CD14-positive monocyte (primary cell): ENCODE measurements at regions of chr4 and their contacts with region 1.

Region 1: DNA sequence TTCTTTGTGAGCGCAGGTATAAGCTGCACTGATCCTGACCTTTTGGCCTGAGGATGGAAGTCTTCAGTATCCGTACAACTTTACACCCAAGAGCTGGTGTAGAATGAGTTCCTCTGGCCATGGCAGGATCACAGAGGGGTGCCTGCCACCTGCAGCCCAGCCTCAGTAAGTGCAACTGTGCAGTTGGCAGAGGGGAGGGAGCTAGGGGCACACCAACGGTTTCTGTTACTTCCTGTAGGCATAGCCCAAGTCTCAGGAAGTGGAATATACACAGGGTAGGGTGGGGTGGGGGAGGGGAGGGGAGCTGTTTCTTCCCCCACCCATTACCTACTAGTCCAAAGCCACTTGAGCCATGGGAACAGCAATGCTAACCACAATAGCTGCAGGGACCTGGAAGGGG is 85.4 kb upstream of the GBA3 start:
- DNase-seq: peak in 2 of 3 donors; percentile 2 to 43
- H3K4me3 ChIP-seq: no peak overlapping the region
- H3K4me3 Mint-ChIP-seq: no peak overlapping the region
- H3K27ac ChIP-seq: no peak overlapping the region
- H3K27ac Mint-ChIP-seq: no peak overlapping the region
- H3K4me1 ChIP-seq: no peaks in the 10 kb centered on the region
- H3K4me1 Mint-ChIP-seq: peaks cover 3% of the 10 kb centered on the region
- H3K27me3 ChIP-seq: no peaks in the 10 kb centered on the region
- H3K27me3 Mint-ChIP-seq: no peaks in the 10 kb centered on the region
- CTCF ChIP-seq: peak; percentile 45

Region 2: GRCh38 chr4:22410645-22411247 is 196.6 kb before region 1 on chr4:
- intact Hi-C with region 1: loop called in 1 of 2 experiments (anchors 5 kb)
- DNase-seq: no peak
- H3K4me3 ChIP-seq: no peak overlapping the region
- H3K4me3 Mint-ChIP-seq: no peak overlapping the region
- H3K27ac ChIP-seq: no peak overlapping the region
- H3K27ac Mint-ChIP-seq: no peak overlapping the region
- H3K4me1 ChIP-seq: no peaks in the 10 kb centered on the region
- H3K4me1 Mint-ChIP-seq: no peaks in the 10 kb centered on the region
- H3K27me3 ChIP-seq: no peaks in the 10 kb centered on the region
- H3K27me3 Mint-ChIP-seq: no peaks in the 10 kb centered on the region
- CTCF ChIP-seq: peak; percentile 78